Ascending aorta (tissue), 2 donors: ENCODE measurements at regions of chr1 and their contacts with region 1.

Region 1: DNA sequence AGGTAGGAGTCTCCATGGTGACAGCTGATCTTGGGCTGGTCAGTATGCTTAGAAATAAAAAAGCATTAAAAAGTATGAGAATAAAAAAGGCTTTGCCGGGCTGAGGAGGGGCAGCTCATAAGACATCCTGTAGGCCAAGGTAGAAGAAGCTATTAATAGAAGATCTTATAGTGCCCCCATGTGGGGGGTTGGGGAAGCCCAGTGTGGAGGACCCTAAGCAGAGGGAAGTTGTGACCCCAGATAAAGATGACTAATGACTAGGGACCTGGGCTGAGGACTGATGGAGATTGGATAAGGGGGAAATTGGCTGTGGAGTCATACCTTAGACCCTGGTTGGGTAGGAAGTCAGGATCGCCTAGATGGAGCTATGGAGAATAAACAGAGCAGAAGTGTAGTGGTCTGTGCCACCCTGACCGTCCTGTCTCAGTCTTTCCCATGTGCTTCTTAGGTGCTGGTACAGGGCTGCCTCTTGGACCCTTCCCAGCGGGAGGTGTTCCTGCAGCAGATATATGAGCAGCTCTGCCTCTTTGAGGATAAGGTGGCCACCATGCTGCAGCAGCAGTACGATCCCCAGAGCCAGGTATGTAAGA is 25.0 kb downstream of the SZT2 start:
- DNase-seq: no peak
- H3K4me3 ChIP-seq: no peak overlapping the region
- H3K27ac ChIP-seq: no peak overlapping the region
- H3K4me1 ChIP-seq: no peaks in the 10 kb centered on the region
- H3K27me3 ChIP-seq: no peaks in the 10 kb centered on the region
- CTCF ChIP-seq: peak; percentile 44 to 54 (median 49)

Region 2: DNA sequence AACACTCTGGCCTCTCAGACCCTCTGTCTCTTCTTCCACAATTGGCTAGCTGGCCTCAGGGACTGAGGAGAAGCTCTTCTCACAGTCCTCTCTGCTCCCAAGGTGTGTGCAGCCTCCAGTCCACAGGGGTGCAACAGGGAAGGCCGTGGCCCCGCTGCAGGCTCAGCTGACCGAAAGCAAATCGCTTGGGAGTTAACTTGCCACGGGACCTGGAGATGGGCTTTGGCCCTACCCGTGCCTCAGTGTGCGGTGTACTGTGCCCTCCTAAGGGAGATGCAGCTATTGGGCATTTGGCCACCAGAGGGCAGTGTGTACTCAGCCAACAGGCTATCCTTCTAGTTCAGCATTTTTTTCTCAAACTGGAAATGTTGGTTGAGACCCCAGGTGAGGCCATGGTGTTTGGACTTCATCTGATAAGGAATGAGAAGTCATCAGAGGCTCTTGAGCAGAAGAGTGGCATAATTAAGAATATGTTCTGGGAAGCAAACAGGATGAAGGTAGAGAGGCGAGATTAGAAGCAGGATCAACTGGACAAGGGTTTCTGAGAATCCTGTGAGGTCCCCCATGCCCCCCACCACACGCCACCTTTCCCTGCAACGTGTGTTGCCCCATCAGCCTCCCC is 187.5 kb before region 1 on chr1:
- intact Hi-C with region 1: loop called (anchors 1 kb)
- DNase-seq: peak in 1 of 2 donors; percentile 88
- H3K4me3 ChIP-seq: no peak overlapping the region
- H3K27ac ChIP-seq: no peak overlapping the region
- H3K4me1 ChIP-seq: no peaks in the 10 kb centered on the region
- H3K27me3 ChIP-seq: no peaks in the 10 kb centered on the region
- CTCF ChIP-seq: peak; percentile 83 to 93 (median 87)

Region 3: DNA sequence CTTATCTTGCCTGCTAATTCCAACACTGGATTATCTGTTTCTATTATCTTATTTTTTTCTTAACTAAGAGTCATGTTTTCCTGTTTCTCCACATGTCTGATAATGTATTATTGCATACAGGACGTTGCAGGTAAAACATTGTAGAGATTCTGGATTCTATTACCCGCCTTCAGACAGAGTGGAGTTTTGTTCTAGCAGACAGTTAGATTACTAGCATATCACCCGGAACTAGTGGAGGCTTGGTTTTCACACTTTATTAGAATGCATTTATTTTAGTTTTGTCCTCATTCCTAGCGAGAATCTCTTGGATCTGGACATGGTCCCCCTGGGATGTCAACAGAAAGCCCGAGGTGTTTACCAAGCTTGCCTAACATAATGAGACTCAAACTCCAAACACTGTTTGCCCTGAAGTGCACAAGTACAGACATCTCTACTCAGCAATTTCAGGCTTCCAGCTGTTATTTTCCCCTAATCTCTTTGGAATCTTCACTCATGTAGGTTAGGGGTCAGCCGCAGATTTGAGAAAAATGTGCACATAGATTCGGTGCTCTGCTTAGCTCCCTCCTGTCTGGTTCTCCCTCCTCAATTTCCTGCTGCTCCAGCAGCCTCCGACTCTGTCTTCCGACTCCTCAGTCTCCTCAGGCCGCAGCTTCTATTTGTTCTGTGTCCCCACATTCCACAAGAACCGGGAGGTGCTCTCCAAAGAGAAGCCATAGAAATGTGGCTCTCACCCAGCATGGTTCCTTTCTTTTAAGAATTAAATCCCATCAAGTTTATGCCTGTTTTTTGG is 79.1 kb after region 1 on chr1:
- intact Hi-C with region 1: no loop called
- DNase-seq: no peak
- H3K4me3 ChIP-seq: no peak overlapping the region
- H3K27ac ChIP-seq: no peak overlapping the region
- H3K4me1 ChIP-seq: no peaks in the 10 kb centered on the region
- H3K27me3 ChIP-seq: no peaks in the 10 kb centered on the region
- CTCF ChIP-seq: no peak